BJ (cell line): ENCODE measurements at regions of chr11 and their contacts with region 1.

Region 1: DNA sequence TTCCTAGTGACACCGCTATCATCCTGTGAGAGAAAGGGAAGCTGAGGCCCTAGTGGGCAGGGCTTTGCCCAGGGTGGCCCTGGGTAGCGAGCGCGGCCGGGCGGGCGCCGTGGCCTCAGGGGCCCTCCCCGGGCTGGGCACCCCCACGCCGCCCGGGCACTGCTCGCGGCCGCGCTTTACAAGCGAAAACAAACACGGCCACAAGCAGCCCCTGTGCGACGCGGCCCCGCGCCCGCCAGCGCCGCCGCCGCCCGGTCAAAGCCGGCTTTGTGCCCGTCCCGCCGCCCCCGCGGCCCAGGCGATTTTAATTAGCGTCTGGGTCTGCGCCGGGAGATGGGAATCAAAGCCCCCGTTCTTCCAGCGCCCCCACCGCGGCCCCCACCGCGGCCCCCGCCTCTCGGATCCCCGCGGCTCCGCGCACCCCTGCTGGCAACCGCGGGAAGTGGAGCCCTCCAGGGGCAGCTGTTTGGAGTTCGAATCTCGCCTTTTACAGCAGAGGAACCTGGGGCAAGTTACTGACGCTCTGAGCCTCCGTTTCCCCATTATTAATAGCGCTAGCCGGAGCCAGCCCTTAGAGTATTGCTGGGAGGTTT is 47.9 kb downstream of the CHRDL2 start:
- DNase-seq: no peak
- H3K4me3 ChIP-seq: no peak overlapping the region
- H3K27me3 ChIP-seq: no peaks in the 10 kb centered on the region
- CTCF ChIP-seq: peak; percentile 59

Region 2: DNA sequence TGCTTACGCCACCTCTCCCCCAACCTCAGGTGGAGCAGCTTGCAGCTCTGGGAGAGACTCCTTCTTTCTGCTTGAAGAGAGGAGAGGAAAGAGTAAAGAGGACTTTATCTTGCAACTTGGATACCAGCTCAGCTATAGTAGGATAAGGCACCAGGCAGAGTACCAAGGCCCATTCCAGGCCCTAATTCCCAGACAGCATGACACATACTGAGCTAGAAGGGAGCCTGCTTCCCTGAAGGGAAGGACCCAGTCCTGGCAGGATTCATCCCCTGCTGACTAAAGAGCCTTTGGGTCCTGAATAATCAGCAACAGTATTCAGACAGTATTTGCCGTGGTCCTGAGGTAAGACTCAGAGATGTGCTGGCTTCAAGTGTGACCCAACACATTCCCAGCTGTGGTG is 470.8 kb before region 1 on chr11:
- CTCF ChIA-PET with region 1: no interaction called
- POLR2A ChIA-PET with region 1: no interaction called
- DNase-seq: no peak
- H3K4me3 ChIP-seq: no peak overlapping the region
- H3K27me3 ChIP-seq: no peaks in the 10 kb centered on the region
- CTCF ChIP-seq: no peak

Region 3: DNA sequence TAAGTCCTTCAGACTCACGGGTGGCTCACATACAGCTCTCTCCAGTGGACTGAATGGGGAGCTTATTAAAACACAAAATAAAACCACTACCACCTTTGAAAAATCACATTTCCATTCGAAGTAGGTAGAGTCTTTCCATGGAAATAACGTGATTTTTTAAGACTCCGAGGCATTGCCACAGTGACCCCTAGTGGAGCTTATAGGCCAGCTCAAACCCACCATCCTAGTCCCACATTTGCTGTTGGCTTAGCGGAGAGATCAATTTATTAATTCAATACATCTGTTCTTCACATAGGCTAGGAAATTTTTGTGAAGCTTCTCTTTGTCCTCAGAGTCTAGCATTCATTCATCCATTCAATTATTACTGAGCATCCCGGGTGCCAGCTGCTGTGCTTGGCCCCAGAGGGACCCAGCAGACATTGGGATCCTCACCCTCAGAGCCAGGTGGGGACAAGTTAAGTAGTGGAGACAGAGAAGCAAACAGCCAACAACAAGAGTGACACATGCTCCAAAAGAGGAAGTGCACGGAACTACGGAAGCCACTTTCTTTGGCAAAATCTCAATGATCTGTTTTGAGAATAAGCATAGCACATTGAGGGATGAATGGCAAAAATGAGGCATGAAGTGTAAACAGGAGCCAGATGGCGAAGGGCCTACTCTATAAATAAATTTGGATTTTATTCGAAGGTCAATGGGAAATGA is 361.7 kb before region 1 on chr11:
- CTCF ChIA-PET with region 1: no interaction called
- POLR2A ChIA-PET with region 1: no interaction called
- DNase-seq: peak; percentile 32
- H3K4me3 ChIP-seq: no peak overlapping the region
- H3K27me3 ChIP-seq: no peaks in the 10 kb centered on the region
- CTCF ChIP-seq: peak; percentile 57

Region 4: DNA sequence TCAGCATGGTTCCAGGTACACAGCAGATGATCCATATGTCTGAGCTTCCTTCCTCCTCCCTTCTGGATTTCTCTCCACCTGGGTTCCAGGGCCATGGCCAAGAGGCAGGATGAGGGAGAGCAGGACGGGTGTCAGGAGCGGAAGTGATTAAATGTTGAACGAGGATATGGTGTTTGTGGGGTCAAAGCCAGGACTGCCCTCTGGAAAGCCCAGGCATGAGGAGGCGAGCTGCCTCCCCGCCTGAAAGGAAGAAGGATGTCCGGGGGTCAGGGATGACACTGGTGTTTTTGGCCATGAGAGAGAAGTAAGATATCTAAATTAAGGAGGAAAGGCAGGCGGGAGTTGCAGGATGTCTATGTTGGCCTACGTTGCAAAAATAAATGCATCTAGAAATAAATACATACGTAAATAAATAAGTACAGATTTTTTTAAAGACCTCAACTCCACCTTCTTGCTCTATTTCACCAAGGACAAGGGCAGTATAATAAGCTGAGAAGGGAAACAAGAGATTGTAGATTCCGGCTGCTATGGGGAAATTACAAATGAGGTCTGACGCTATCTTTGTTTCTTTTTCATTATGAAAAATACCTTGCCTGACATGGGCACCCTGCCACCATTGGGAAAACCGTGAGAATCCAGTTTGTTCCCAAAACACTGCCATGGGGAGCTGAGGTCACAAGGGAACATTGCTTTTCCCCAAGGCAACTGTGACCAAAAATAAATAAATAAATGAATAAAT is 162.3 kb before region 1 on chr11:
- CTCF ChIA-PET with region 1: no interaction called
- POLR2A ChIA-PET with region 1: no interaction called
- DNase-seq: no peak
- H3K4me3 ChIP-seq: no peak overlapping the region
- H3K27me3 ChIP-seq: peaks cover 3% of the 10 kb centered on the region
- CTCF ChIP-seq: no peak

Region 5: DNA sequence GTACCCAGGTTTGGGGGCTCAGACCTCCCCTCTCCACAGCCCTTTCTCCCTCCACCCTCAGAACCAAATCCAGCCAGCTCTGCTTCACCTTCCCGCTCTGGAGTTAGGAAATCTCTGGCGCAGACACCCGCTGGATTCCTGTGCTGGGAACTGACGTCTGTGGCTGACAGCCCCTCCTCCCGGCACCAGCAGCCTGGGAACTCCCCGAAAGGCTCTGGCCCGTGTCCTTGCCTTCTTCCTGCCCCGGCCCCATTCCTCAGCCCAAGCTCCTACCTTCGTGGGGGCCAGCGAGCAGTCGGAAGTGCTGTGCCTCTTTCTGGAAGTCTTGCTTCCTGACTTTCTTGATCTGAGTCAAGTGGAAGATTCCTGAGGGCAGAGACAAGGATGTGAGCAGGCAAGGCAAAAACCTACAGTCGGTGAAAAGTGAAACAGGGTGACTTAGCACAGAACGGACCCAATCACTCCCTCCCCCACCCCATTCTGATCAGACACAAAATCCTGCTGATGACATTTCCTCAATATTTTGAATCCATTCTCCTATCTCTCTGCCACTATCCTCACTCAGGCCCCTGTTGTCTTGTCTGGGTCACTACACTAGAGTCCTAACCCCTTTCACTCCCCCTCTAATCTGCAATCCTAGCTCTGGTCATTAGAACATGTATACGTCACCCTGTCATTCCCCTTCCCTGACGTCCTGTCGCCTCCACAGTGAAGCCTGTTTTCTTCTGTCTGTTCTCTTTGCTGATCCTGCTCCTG is 13.7 kb after region 1 on chr11:
- CTCF ChIA-PET with region 1: interaction called, 36 read pairs
- POLR2A ChIA-PET with region 1: no interaction called
- DNase-seq: peak; percentile 60
- H3K4me3 ChIP-seq: no peak overlapping the region
- H3K27me3 ChIP-seq: no peaks in the 10 kb centered on the region; the same call in 1 of the 2 replicates
- CTCF ChIP-seq: no peak

Region 6: GRCh38 chr11:75142714-75143419 is 459.5 kb after region 1 on chr11:
- CTCF ChIA-PET with region 1: no interaction called
- POLR2A ChIA-PET with region 1: no interaction called
- DNase-seq: peak; percentile 73
- H3K4me3 ChIP-seq: no peak overlapping the region
- H3K27me3 ChIP-seq: peaks cover 8% of the 10 kb centered on the region
- CTCF ChIP-seq: no peak